ENCODE measurements at regions of chr21 and their contacts with region 1.

Region 1: DNA sequence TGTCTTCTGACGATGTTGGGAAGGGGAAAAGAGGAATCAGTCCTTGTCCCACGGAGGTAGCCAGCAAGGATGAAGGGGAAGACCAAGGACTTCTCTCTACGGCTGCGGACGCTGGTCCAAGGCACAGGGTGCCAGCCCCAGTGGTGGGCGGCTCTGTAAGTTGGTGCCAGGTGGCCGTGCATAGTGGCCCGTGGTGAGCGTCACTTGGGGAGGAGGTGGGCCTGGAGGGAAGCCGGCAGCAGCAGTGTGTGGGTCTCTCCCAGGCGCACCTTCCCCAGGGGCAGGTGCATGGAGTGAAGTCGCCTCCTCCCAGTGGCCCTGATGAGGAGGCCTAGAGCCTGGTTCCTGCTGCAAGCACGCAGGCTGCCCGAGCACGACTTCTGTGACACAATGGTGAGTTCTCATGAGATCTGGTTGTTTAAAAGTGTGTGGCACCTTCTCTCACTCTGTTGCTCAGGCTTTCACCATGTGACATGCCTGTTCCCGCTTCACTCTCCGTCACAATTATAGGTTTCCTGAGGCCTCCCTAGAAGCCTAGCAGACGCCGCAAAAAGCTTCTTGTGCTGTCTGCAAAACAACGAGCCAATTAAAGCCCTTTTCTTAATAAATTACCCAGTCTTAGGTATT is 43.6 kb upstream of the TIAM1 start:
- DNase-seq: no peak
- H3K4me3 ChIP-seq: no peak overlapping the region
- H3K27ac ChIP-seq: no peak overlapping the region
- H3K4me1 ChIP-seq: no peaks in the 10 kb centered on the region
- H3K27me3 ChIP-seq: no peaks in the 10 kb centered on the region
- CTCF ChIP-seq: no peak

Region 2: GRCh38 chr21:31489014-31489413 is 101.3 kb after region 1 on chr21:
- CTCF ChIA-PET with region 1: no interaction called
- dilution Hi-C with region 1: loop called (anchors 5 kb)
- in situ Hi-C with region 1: no loop called
- intact Hi-C with region 1: no loop called
- DNase-seq: no peak
- H3K4me3 ChIP-seq: no peak overlapping the region
- H3K27ac ChIP-seq: no peak overlapping the region
- H3K4me1 ChIP-seq: no peaks in the 10 kb centered on the region
- H3K27me3 ChIP-seq: no peaks in the 10 kb centered on the region
- CTCF ChIP-seq: no peak

Measured in mammary epithelial cell (primary cell).